OCI-LY7 (cell line): ENCODE measurements at regions of chr12 and their contacts with region 1.

Region 1: DNA sequence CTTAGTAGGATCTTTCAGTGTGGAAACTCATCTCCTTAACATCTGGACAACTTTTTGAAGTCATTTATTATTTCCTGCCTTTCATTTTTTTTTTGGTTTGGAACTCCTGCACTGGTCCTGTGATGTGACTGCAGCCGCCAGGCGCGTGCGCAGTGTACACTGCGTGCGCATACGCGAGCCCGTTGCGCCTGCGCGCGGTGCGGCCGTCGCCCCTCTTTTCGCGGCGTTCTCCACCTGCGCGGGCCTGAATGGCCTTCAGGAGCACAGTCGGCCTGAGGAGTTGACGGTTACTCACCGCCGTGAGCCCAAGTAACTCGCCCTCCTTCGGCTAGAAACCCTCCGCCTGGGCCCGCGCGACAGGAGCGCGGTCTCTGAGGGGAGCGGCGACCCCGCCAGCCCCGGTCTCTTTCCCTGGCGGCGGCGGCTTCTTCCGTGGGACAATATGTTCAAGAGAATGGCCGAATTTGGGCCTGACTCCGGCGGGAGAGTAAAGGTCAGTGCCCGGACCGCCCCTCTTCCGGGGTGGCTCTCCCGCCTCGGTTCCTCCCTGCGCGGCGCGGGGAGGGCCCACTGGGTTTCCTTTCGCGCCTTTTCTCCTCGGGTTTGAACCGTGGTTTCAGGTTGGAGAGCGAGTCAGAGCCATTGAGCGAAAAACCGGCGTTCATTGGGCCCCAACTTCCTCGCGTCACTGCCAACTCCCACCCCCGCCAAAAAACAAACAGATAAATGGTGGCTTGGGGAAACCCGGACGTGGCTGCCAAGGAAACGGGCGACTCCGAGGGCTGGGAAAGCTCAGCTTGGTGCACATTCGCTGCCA is at the start of gene YEATS4:
- DNase-seq: peak; percentile 95
- H3K4me3 ChIP-seq: peak within 1 kb of the TSS; percentile 90
- H3K27ac ChIP-seq: peak within 1 kb of the TSS; percentile 89
- H3K4me1 ChIP-seq: peaks cover 22% of the 10 kb centered on the region
- CTCF ChIP-seq: no peak
- total RNA-seq, gene YEATS4: 119 and 122 TPM in 2 replicates

Region 2: DNA sequence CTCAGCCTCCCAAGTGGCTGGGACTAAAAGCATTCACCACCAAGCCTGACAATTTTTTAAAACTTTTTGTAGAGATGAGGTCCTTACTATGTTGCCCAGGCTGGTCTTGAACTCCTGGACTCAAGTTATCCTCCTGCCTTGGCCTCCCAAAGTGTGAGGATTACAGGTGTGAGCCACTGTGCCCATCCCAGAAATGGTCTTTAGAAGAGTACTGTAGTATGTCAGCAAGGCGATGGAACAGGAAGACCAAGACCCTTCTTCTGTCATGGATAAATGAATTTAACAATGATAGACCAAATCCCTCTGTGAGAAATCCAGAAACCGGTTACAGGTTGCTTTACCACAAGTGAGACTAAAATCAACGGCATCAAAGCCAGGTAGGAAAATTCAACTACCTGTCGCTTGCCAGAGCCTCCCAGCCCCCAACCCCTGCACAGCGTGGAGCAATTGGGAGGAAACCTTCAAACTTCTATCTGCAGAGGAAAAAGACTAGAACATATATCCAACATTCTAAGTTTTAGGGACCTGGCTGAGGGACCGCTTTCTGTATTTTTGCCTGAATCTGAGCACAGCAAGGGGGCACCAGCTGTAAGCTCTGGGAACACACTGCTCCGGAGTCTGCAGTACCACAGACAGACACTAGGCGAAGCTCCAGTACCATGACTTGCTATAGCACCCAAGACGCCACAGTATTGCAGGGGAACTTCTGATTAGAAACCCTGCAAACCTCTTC is 69.0 kb before region 1 on chr12:
- CTCF ChIA-PET with region 1: no interaction called
- POLR2A ChIA-PET with region 1: interaction called, 3 read pairs
- intact Hi-C with region 1: loop called (anchors 2 kb)
- DNase-seq: peak; percentile 87
- H3K4me3 ChIP-seq: no peak overlapping the region
- H3K27ac ChIP-seq: no peak overlapping the region
- H3K4me1 ChIP-seq: no peaks in the 10 kb centered on the region
- CTCF ChIP-seq: peak; percentile 99

Region 3: DNA sequence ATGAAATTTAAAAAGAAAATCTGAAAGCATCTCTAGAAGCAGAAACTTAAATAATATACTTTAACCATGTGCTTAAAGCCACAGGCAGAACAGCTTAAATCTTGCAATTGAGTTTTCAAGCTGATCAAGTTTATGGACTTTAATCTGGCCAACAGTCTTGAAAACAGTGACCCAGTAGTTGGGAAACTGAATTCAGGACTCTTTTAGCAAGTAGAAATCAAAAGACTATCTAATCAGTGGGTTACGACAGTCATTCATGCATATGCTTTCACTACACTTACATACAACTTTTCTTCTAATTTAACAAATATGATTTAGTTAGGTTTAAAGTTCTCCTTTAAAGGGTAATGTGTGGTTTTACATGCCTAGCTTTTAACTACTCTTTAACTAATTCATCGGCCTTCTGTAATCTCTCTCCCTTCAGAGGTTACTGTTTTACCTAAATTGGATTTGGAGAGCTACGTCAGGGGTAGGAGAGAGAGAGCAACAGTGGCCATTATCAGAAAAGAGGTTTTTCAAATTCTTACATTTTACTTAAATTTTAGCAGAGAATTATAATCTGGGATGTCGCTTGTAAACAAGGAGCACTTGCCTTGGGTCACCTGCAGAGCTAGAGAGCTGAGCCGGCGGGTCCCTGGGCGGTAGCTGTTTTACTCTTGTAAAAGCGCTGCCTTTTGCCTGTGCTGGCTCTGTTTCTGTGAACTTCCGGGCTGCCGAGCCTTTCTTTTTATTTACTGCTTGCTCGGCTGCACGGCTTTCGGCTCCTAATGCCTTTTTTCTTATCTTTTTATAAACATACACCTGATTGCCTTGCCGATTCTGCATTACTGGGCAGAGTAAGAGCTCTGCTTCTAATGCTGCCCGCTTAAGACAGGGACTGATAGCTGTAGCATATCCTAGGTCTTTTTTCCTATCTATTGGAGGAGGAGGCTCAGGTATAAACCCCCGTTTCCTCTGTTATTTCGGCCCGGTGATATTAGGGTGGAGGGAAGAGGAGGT is 29.0 kb before region 1 on chr12:
- CTCF ChIA-PET with region 1: no interaction called
- POLR2A ChIA-PET with region 1: interaction called, 18 read pairs
- intact Hi-C with region 1: no loop called
- DNase-seq: peak; percentile 77
- H3K4me3 ChIP-seq: peak overlapping the region; percentile 61
- H3K27ac ChIP-seq: peak overlapping the region; percentile 69
- H3K4me1 ChIP-seq: peaks cover 32% of the 10 kb centered on the region
- CTCF ChIP-seq: no peak

Region 4: DNA sequence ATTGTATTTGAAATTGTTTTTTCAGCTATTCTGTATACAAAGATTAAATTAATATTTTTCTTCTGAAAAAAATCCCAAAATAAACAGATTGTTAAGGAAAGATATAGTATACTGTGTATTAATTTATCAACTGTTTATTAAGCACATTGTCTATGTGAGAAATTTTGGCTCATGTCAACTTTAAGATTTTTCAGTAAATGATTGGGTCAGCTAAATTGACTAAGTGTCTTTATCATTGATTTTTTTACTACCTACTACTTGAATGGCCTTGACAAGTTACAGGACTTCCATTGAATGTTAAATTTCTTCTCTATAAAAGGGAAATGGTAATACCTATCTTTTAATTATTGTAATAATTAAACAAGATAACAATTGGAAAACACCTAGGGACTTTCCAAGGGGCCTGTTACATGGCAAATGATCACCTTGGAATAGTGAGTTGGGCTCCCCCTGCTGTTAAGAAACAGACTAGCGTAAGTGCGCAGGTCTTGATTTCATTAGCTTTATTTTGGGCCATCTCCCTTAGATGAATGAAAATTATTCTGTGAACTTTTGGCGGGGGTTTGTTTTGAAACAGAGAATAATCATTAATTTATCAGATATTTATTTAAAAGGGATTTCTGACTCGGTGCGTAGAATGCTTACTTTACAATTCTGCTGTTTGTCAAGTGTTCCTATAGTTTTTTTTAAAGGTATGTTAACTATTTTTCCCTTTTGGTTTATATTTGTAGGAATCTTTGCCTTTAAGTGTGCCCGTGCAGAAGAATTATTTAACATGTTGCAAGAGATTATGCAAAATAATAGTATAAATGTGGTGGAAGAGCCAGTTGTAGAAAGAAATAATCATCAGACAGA is 211.0 kb after region 1 on chr12:
- CTCF ChIA-PET with region 1: no interaction called
- POLR2A ChIA-PET with region 1: interaction called, 12 read pairs
- intact Hi-C with region 1: loop called (anchors 1 kb)
- DNase-seq: peak; percentile 75
- H3K4me3 ChIP-seq: no peak overlapping the region
- H3K27ac ChIP-seq: no peak overlapping the region
- H3K4me1 ChIP-seq: no peaks in the 10 kb centered on the region
- CTCF ChIP-seq: peak; percentile 96

Region 5: GRCh38 chr12:69585189-69586062 is 225.7 kb after region 1 on chr12 and contains the start of gene CCT2:
- CTCF ChIA-PET with region 1: no interaction called
- POLR2A ChIA-PET with region 1: interaction called, 5 read pairs
- intact Hi-C with region 1: loop called (anchors 1 kb)
- DNase-seq: peak; percentile 99
- H3K4me3 ChIP-seq: peak within 1 kb of the TSS; percentile 91
- H3K27ac ChIP-seq: peak within 1 kb of the TSS; percentile 79
- H3K4me1 ChIP-seq: peaks cover 12% of the 10 kb centered on the region
- CTCF ChIP-seq: peak; percentile 62
- total RNA-seq, gene CCT2: 248 and 264 TPM in 2 replicates

Region 6: DNA sequence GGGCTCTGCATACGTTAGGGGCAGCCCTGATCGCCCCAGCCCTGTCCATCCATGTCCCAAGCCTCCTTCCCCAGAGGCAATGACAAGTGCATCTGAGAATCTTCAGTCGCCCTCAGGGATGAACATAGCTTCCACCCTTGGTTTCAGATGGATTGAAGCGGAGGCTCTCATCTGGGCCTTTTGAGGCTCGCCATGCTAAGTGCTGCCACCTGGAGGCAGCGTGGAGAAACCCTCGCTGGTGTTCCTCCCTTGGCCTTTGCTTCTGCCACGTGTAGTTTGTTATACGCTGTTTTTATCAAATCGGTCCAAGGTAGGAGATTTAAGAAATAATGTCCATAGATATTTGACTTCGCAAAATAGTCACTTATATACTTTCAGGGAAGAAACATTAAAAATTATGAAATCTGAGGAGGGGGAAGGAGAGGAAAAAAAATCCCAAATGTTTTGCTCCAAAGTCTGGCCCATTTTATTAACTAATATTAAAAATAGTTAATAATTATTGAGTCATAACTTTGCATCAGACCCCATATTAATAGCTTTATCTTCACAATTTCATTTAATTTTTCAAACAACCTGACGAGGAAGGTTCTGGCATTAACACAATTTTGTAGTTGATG is 279.8 kb after region 1 on chr12:
- CTCF ChIA-PET with region 1: interaction called, 3 read pairs
- POLR2A ChIA-PET with region 1: no interaction called
- intact Hi-C with region 1: loop called (anchors 5 kb)
- DNase-seq: peak; percentile 71
- H3K4me3 ChIP-seq: no peak overlapping the region
- H3K27ac ChIP-seq: no peak overlapping the region
- H3K4me1 ChIP-seq: no peaks in the 10 kb centered on the region
- CTCF ChIP-seq: peak; percentile 96